Right ventricle myocardium inferior (tissue), 1 donor: ENCODE measurements at regions of chr1 and their contacts with region 1.

Region 1: GRCh38 chr1:91885716-91886506 is at the start of gene TGFBR3:
- DNase-seq: peak; percentile 94
- ATAC-seq: peak; percentile 97
- total RNA-seq, gene TGFBR3: 36.3 TPM

Region 2: GRCh38 chr1:91604632-91605031 is 281.3 kb before region 1 on chr1:
- intact Hi-C with region 1: loop called (anchors 1 kb)
- DNase-seq: no peak
- ATAC-seq: peak; percentile 20

Region 3: GRCh38 chr1:91795591-91796389 is 90.1 kb before region 1 on chr1:
- intact Hi-C with region 1: loop called (anchors 10 kb)
- DNase-seq: no peak
- ATAC-seq: no peak

Region 4: DNA sequence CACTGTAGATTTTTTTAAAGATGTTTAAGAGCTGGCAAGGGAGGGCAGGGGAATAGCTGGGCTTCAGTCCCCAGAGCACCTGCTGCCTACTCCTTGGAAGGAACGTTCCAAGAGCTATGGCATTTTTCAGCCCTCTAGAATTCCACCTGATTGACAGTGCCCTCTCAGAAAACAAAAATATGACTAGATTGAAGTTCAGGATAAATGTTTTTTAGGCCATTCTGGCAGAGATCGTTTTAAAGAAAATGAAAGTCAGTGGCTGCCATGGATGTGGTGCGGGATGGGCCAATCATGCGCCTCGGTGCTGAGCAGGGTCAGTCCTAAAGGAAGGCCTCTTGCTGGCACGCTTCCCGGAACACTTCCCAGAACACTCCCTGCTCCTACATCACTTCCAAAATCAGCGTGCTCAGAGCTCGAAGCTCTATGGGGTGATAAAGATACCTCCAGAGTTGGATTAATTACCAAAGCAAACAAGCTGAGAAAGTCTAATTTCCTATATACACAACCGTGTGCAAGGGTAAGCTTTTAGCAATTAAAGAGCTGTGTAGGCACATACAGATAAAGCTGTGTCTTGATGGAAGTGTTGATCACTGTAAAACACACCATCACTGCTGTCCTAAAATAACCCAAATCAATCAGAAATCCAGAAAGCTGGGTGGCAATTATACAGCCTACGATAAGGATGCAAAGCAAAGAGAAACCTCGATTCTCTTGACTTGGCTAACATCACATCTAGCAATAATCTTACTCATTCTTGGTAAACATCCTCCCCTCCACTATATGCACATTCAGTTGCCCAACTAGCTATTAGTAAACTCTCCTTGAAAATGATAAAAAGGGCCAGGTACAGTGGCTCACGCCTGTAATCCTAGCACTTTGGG is 34.5 kb before region 1 on chr1:
- intact Hi-C with region 1: loop called (anchors 1 kb)
- DNase-seq: peak; percentile 95
- ATAC-seq: peak; percentile 93

Region 5: DNA sequence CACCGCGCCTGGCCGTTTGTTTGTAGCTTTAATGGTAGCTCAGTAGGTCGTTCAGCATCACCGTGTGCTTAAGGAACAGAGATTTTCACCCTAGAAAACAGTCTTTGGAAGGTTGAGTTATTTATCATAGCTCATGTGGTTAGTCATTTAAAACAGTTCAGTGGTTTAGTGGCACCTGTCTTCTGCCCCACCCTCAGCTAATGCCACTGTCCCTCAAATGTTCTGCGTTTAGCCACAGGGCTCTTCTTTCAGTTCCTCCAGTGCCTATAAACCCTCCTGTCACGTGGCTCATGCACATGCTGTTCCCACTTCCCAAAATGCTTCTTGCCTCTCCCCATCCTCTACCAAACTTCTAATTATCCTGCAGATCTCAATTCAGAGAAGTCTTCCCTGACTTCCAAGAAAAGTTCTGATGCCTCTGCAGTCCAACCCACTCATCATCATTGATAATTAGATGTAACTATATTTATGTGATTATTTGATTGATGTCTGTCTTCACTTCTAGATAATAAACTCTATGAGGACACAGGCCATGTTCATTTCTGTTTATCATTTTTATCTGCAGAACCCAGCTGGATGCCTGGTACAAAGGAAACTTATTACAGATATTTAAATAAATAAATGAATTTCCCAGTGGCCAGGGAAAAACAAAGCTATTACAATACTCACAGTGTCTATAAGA is 1089.8 kb after region 1 on chr1:
- intact Hi-C with region 1: no loop called
- DNase-seq: no peak
- ATAC-seq: no peak